ENCODE measurements at regions of chr4 and their contacts with region 1.

Region 1: GRCh38 chr4:74320559-74321118 is 12.4 kb downstream of the EPGN start:
- DNase-seq: peak; percentile 85
- H3K4me3 Mint-ChIP-seq: peak overlapping the region; percentile 56
- H3K27ac Mint-ChIP-seq: peak overlapping the region; percentile 58
- H3K4me1 Mint-ChIP-seq: peaks cover 15% of the 10 kb centered on the region
- H3K27me3 Mint-ChIP-seq: no peaks in the 10 kb centered on the region
- CTCF ChIP-seq: peak; percentile 54

Region 2: GRCh38 chr4:74357994-74358393 is 37.4 kb after region 1 on chr4:
- CTCF ChIA-PET with region 1: interaction called, 3 read pairs
- intact Hi-C with region 1: loop called (anchors 5 kb)
- DNase-seq: no peak
- H3K4me3 Mint-ChIP-seq: peak overlapping the region; percentile 43
- H3K27ac Mint-ChIP-seq: peak overlapping the region; percentile 72
- H3K4me1 Mint-ChIP-seq: peaks cover 48% of the 10 kb centered on the region
- H3K27me3 Mint-ChIP-seq: no peaks in the 10 kb centered on the region
- CTCF ChIP-seq: no peak

Region 3: DNA sequence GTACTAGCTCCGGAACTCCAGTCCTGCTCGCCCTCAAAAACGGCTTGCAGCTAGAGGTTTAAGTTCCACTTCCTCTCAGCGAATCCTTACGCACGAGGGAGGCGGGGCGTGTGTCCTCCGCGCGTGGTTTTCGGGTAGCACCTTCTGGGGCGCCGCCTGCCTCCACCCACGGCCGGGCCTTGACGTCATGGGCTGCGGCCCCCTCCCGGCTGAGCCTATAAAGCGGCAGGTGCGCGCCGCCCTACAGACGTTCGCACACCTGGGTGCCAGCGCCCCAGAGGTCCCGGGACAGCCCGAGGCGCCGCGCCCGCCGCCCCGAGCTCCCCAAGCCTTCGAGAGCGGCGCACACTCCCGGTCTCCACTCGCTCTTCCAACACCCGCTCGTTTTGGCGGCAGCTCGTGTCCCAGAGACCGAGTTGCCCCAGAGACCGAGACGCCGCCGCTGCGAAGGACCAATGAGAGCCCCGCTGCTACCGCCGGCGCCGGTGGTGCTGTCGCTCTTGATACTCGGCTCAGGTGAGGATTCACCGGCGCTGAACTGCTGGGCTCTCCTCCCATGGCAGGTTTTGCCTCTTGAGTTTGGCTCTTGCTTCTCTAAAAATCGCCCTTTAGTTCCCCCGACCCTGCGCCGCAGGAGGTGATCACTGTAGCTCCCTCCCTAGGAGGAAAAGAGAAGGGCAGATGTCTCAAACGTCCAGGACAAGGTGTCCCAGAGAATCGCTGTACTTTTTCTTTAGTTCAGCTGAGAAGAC is 124.4 kb after region 1 on chr4 and contains the start of gene AREG:
- CTCF ChIA-PET with region 1: interaction called, 3 read pairs
- intact Hi-C with region 1: loop called (anchors 2 kb)
- DNase-seq: peak; percentile 89
- H3K4me3 Mint-ChIP-seq: peak within 1 kb of the TSS; percentile 84
- H3K27ac Mint-ChIP-seq: peak within 1 kb of the TSS; percentile 96
- H3K4me1 Mint-ChIP-seq: peaks cover 6% of the 10 kb centered on the region
- H3K27me3 Mint-ChIP-seq: no peaks in the 10 kb centered on the region
- CTCF ChIP-seq: peak; percentile 28
- total RNA-seq, gene AREG: 230 and 281 TPM in 2 replicates

Region 4: DNA sequence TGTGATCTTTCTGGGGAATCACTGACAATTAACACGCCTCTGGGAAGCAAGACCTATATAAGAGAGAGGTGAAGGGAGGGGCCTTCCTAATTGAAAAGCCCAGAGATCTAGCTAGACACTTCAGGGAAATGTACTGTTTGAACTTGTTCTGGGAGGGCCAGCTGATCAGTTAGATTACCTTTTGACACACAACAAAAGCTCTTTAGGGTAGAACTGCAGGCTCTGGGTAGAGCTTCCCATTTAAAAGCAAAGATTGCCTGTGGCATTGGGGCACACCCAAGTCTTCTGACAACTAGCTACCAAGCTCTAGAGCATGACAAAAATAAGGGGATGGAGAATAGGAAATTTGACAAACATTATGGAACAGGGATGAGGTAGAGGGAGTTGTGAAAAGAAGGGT is 150.6 kb after region 1 on chr4:
- CTCF ChIA-PET with region 1: no interaction called
- intact Hi-C with region 1: no loop called
- DNase-seq: no peak
- H3K4me3 Mint-ChIP-seq: no peak overlapping the region
- H3K27ac Mint-ChIP-seq: no peak overlapping the region
- H3K4me1 Mint-ChIP-seq: peaks cover 39% of the 10 kb centered on the region
- H3K27me3 Mint-ChIP-seq: no peaks in the 10 kb centered on the region
- CTCF ChIP-seq: no peak

Region 5: GRCh38 chr4:74545488-74545887 is 224.8 kb after region 1 on chr4:
- CTCF ChIA-PET with region 1: interaction called, 11 read pairs
- intact Hi-C with region 1: no loop called
- DNase-seq: peak; percentile 38
- H3K4me3 Mint-ChIP-seq: no peak overlapping the region
- H3K27ac Mint-ChIP-seq: no peak overlapping the region
- H3K4me1 Mint-ChIP-seq: peaks cover 12% of the 10 kb centered on the region
- H3K27me3 Mint-ChIP-seq: no peaks in the 10 kb centered on the region
- CTCF ChIP-seq: no peak

Region 6: DNA sequence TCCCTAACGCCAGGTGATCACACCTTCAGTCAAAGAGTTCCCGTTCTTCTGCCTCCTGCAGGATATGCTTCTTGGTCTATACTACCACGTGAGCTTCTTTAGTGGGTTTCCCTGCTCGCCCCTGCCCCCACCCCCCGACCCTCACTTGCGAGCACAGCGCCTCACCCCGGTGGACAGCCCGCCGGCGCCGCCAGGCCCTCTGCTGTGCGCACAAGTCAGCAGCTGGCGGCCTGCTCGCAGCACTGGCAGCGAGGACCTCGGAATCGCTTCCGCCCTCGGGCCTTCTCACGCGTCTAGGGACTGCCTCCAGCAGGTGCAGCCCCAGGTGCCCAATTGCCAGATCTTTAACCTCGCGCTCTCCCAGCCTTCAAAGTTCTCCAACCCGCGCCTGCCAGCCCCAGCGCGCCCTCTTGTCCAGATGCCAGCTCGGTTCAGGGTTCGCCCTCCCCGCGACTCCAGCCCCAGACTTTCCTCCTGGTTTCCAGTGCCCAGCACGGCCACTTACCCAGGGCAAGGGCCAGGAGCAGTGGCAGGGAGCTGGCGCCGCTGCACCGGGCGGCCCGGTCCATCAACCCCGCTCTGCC is 473.2 kb after region 1 on chr4:
- CTCF ChIA-PET with region 1: no interaction called
- intact Hi-C with region 1: loop called (anchors 10 kb)
- DNase-seq: peak; percentile 75
- H3K4me3 Mint-ChIP-seq: peak overlapping the region; percentile 93
- H3K27ac Mint-ChIP-seq: peak overlapping the region; percentile 85
- H3K4me1 Mint-ChIP-seq: peaks cover 14% of the 10 kb centered on the region
- H3K27me3 Mint-ChIP-seq: no peaks in the 10 kb centered on the region
- CTCF ChIP-seq: no peak

Region 7: DNA sequence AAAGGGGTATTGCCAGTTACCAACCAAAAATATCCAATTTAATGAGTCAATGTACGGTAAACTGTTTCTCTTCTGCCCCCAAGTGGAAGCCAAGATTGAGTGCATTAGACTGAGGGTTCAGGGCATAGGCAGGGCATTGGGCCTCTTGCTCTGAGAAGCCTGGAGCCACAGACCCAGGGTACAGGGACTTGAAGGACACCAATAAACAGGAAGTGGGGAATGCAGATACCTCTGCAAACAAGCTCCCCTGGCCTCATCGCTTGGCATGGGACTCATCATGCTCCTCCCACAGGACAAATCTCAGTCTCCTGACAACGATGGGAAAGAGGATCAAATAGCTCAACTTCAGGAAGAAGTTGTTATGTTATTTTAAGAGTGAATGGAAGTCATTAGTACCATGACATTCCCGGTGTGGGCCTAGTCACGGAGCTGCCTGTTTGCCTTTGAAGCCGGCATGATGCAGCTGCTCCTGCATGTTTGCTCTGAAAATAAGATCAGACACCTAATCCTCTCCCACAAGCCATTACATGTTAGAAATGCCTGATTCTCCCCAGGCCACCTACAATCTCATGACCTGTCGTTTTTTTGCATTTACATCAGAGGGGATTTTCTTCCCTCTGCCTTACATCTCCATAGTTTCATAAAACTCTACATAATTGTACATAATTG is 969.4 kb after region 1 on chr4:
- CTCF ChIA-PET with region 1: no interaction called
- intact Hi-C with region 1: loop called (anchors 10 kb)
- DNase-seq: peak; percentile 17
- H3K4me3 Mint-ChIP-seq: no peak overlapping the region
- H3K27ac Mint-ChIP-seq: no peak overlapping the region
- H3K4me1 Mint-ChIP-seq: no peaks in the 10 kb centered on the region
- H3K27me3 Mint-ChIP-seq: peaks cover 13% of the 10 kb centered on the region
- CTCF ChIP-seq: no peak